Vagina (tissue), 2 donors: ENCODE measurements at regions of chr2 and their contacts with region 1.

Region 1: GRCh38 chr2:229422063-229422462 is 151.0 kb upstream of the PID1 start:
- DNase-seq: no peak
- H3K4me3 ChIP-seq: no peak overlapping the region
- H3K27ac ChIP-seq: no peak overlapping the region
- H3K4me1 ChIP-seq: peaks cover 15% of the 10 kb centered on the region
- H3K27me3 ChIP-seq: no peaks in the 10 kb centered on the region
- CTCF ChIP-seq: no peak
- POLR2A ChIP-seq: no peak

Region 2: GRCh38 chr2:229586746-229587705 is 165.0 kb after region 1 on chr2:
- intact Hi-C with region 1: loop called (anchors 10 kb)
- DNase-seq: no peak
- H3K4me3 ChIP-seq: peak overlapping the region in 1 of 2 donors; percentile 26
- H3K27ac ChIP-seq: peak overlapping the region; percentile 63
- H3K4me1 ChIP-seq: peaks cover 6% of the 10 kb centered on the region
- H3K27me3 ChIP-seq: no peaks in the 10 kb centered on the region
- CTCF ChIP-seq: peak; percentile 79 to 83 (median 80)
- POLR2A ChIP-seq: no peak